CD8-positive, alpha-beta memory T cell (primary cell): ENCODE measurements at regions of chrX and their contacts with region 1.

Region 1: GRCh38 chrX:48911412-48912182 is at the start of gene SLC35A2:
- DNase-seq: peak; percentile 78 to 93 (median 87)
- H3K4me3 ChIP-seq: peak within 1 kb of the TSS; percentile 65
- H3K4me3 Mint-ChIP-seq: peak within 1 kb of the TSS; percentile 86 to 94 (median 88)
- H3K27ac ChIP-seq: peak within 1 kb of the TSS; percentile 92
- H3K27ac Mint-ChIP-seq: peak within 1 kb of the TSS; percentile 90 to 99 (median 95)
- H3K4me1 ChIP-seq: peaks cover 55% of the 10 kb centered on the region
- H3K4me1 Mint-ChIP-seq: peaks cover 43 to 61% (median 58%) of the 10 kb centered on the region in 3 donors
- H3K27me3 ChIP-seq: no peaks in the 10 kb centered on the region
- H3K27me3 Mint-ChIP-seq: peaks cover 0 to 12% of the 10 kb centered on the region in 2 donors
- total RNA-seq, gene SLC35A2: 27.1 to 27.2 TPM

Region 2: DNA sequence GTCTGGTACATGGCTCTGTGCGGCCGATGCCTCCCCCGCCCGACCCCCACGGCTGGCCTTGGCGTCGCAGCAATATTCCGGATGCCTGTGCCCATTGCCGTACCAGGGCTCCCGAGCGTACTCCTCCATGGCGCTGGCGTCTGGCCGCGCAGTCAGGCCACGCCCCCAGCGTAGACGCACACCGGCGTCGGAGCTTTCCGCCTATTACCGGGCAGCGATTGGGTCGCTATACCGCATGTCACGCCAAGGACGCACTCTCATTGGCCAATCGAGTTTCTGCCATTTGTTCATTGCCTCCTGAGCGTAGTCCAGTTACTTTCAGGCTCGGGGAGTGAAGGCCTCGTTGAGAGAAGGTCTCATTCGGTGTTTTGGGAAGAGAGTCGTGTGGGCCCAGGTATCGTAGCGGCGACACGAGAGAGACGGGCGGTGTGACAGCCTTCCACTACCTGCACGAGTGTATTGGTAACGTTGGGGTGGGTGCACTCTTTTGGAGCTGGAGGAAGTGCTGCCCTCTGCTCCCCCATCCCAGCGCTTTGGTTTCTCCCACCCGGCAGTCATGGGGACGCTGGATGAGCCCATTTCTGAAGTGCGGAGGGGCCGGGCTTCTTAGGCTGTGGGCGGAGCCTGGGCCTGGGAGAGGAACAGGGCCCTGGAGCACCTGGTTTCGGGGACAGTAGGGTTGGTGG is 13.8 kb before region 1 on chrX and contains the starts of genes PQBP1 and TIMM17B:
- CTCF ChIA-PET with region 1: interaction called, 10 read pairs
- POLR2A ChIA-PET with region 1: interaction called, 15 read pairs
- DNase-seq: peak; percentile 81 to 93 (median 89)
- H3K4me3 ChIP-seq: peak within 1 kb of the TSS; percentile 91
- H3K4me3 Mint-ChIP-seq: peak within 1 kb of the TSS; percentile 84 to 96 (median 89)
- H3K27ac ChIP-seq: peak within 1 kb of the TSS; percentile 93
- H3K27ac Mint-ChIP-seq: peak within 1 kb of the TSS; percentile 90 to 99 (median 95)
- H3K4me1 ChIP-seq: peaks cover 24% of the 10 kb centered on the region
- H3K4me1 Mint-ChIP-seq: peaks cover 18 to 38% (median 27%) of the 10 kb centered on the region in 3 donors
- H3K27me3 ChIP-seq: no peaks in the 10 kb centered on the region
- H3K27me3 Mint-ChIP-seq: peaks cover 0 to 2% of the 10 kb centered on the region in 2 donors
- total RNA-seq, gene PQBP1: 101 to 106 TPM
- total RNA-seq, gene TIMM17B: 87.5 to 93.6 TPM